ENCODE measurements at regions of chr11 and their contacts with region 1.

Region 1: GRCh38 chr11:44927174-44927661 is 23.5 kb downstream of the TP53I11 start:
- DNase-seq: peak; percentile 89
- ATAC-seq: peak; percentile 68
- H3K4me3 Mint-ChIP-seq: no peak overlapping the region
- H3K27ac Mint-ChIP-seq: no peak overlapping the region; the same call in 1 of the 2 replicates
- H3K4me1 Mint-ChIP-seq: peaks cover 28% of the 10 kb centered on the region
- H3K27me3 Mint-ChIP-seq: no peaks in the 10 kb centered on the region; the same call in 1 of the 2 replicates
- CTCF ChIP-seq: peak; percentile 86

Region 2: GRCh38 chr11:44556735-44557409 is 370.3 kb before region 1 on chr11:
- CTCF ChIA-PET with region 1: interaction called, 12 read pairs
- POLR2A ChIA-PET with region 1: interaction called, 3 read pairs
- DNase-seq: peak; percentile 67
- ATAC-seq: peak; percentile 32
- H3K4me3 Mint-ChIP-seq: no peak overlapping the region
- H3K27ac Mint-ChIP-seq: no peak overlapping the region; the same call in 1 of the 2 replicates
- H3K4me1 Mint-ChIP-seq: peaks cover 31% of the 10 kb centered on the region
- H3K27me3 Mint-ChIP-seq: peaks cover 8% of the 10 kb centered on the region
- CTCF ChIP-seq: peak; percentile 53

Region 3: DNA sequence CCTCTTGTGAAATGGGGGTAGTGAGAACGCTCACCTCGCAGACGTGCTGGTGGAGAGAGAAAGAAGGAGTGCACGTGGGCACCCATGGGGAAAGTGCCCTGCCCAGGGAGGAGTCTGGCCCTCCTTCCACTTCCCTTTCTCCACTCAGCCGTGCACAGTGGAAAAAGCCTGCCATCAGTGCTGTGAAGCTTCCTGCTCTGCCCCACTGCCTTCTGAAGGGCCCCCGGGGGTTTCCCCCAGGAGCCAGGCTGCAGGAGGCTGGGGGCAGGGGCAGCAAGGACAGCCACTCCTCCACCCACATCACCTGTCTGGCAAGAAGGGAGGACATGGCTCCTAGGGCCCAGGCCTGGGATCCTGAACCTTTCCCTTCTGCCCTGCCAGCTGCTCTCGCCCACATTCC is 15.9 kb after region 1 on chr11:
- CTCF ChIA-PET with region 1: interaction called, 150 read pairs
- POLR2A ChIA-PET with region 1: interaction called, 5 read pairs
- DNase-seq: no peak
- ATAC-seq: no peak
- H3K4me3 Mint-ChIP-seq: no peak overlapping the region
- H3K27ac Mint-ChIP-seq: 0 out of 2 replicates have a peak overlapping the region, but pooled peaks have one; percentile 71
- H3K4me1 Mint-ChIP-seq: peaks cover 50% of the 10 kb centered on the region
- H3K27me3 Mint-ChIP-seq: no peaks in the 10 kb centered on the region
- CTCF ChIP-seq: no peak

Region 4: GRCh38 chr11:44970293-44970692 is 43.1 kb after region 1 on chr11:
- CTCF ChIA-PET with region 1: no interaction called
- POLR2A ChIA-PET with region 1: no interaction called
- DNase-seq: no peak
- ATAC-seq: no peak
- H3K4me3 Mint-ChIP-seq: no peak overlapping the region
- H3K27ac Mint-ChIP-seq: no peak overlapping the region
- H3K4me1 Mint-ChIP-seq: peaks cover 8% of the 10 kb centered on the region
- H3K27me3 Mint-ChIP-seq: no peaks in the 10 kb centered on the region
- CTCF ChIP-seq: no peak

Region 5: GRCh38 chr11:45017329-45017728 is 90.1 kb after region 1 on chr11:
- CTCF ChIA-PET with region 1: interaction called, 14 read pairs
- POLR2A ChIA-PET with region 1: no interaction called
- DNase-seq: peak; percentile 52
- ATAC-seq: peak; percentile 91
- H3K4me3 Mint-ChIP-seq: no peak overlapping the region
- H3K27ac Mint-ChIP-seq: no peak overlapping the region
- H3K4me1 Mint-ChIP-seq: peaks cover 21% of the 10 kb centered on the region
- H3K27me3 Mint-ChIP-seq: peaks cover 24% of the 10 kb centered on the region
- CTCF ChIP-seq: peak; percentile 43; the same call in 1 of the 2 replicates

Region 6: GRCh38 chr11:45089676-45090499 is 162.7 kb after region 1 on chr11:
- CTCF ChIA-PET with region 1: interaction called, 10 read pairs
- POLR2A ChIA-PET with region 1: no interaction called
- DNase-seq: peak; percentile 49
- ATAC-seq: peak; percentile 16
- H3K4me3 Mint-ChIP-seq: no peak overlapping the region
- H3K27ac Mint-ChIP-seq: no peak overlapping the region; the same call in 1 of the 2 replicates
- H3K4me1 Mint-ChIP-seq: peaks cover 84% of the 10 kb centered on the region
- H3K27me3 Mint-ChIP-seq: no peaks in the 10 kb centered on the region; the same call in none of the 2 replicates
- CTCF ChIP-seq: no peak

Measured in WTC11 (cell line).